A673 (cell line): ENCODE measurements at regions of chr6 and their contacts with region 1.

Region 1: GRCh38 chr6:52598123-52598823 is 21.4 kb upstream of the TRAM2 start:
- DNase-seq: peak; percentile 91
- H3K4me3 ChIP-seq: no peak overlapping the region
- H3K27ac ChIP-seq: no peak overlapping the region
- H3K4me1 ChIP-seq: peaks cover 20% of the 10 kb centered on the region
- H3K27me3 ChIP-seq: no peaks in the 10 kb centered on the region
- CTCF ChIP-seq: peak; percentile 89

Region 2: DNA sequence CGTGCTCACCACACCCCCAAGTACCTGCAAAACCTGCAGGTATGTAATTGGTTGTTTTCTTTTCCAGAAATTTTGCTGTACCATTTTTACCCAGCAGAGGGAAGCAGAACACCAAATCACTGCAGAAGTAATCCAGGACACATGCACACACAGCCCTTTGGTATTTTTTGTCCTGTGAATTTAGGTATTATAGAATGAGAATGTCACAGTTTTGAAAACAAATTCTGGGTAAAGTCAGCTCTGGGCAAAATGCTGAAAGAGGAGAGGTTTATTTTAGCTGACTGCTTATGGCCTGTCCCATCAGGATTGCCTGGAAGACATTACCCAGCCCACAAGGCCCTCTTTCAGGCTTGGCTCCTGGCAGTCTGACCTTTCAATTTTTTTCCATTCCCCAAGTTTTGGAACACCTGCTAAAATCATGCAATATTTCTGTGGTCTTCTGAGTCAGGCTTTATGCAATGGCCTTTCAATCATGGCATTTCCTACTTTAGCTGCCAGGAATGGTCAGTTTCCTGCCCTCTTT is 181.6 kb before region 1 on chr6:
- CTCF ChIA-PET with region 1: interaction called, 8 read pairs
- POLR2A ChIA-PET with region 1: no interaction called
- intact Hi-C with region 1: loop called (anchors 1 kb)
- DNase-seq: peak; percentile 80
- H3K4me3 ChIP-seq: no peak overlapping the region
- H3K27ac ChIP-seq: peak overlapping the region; percentile 18
- H3K4me1 ChIP-seq: peaks cover 28% of the 10 kb centered on the region
- H3K27me3 ChIP-seq: no peaks in the 10 kb centered on the region
- CTCF ChIP-seq: peak; percentile 84

Region 3: GRCh38 chr6:52664186-52664990 is 66.1 kb after region 1 on chr6:
- CTCF ChIA-PET with region 1: no interaction called
- POLR2A ChIA-PET with region 1: no interaction called
- intact Hi-C with region 1: loop called (anchors 5 kb)
- DNase-seq: peak; percentile 97
- H3K4me3 ChIP-seq: peak overlapping the region; percentile 64
- H3K27ac ChIP-seq: peak overlapping the region; percentile 54
- H3K4me1 ChIP-seq: peaks cover 26% of the 10 kb centered on the region
- H3K27me3 ChIP-seq: no peaks in the 10 kb centered on the region
- CTCF ChIP-seq: no peak